Sigmoid colon (tissue), 7 donors: ENCODE measurements at regions of chr12 and their contacts with region 1.

Region 1: GRCh38 chr12:48716493-48717251 is at the start of gene CCNT1:
- DNase-seq: peak; percentile 100
- H3K4me3 ChIP-seq: peak within 1 kb of the TSS; percentile 60 to 74 (median 68)
- H3K27ac ChIP-seq: peak within 1 kb of the TSS; percentile 86 to 91 (median 90)
- H3K4me1 ChIP-seq: peaks cover 0 to 36% (median 34%) of the 10 kb centered on the region in 4 donors
- H3K27me3 ChIP-seq: no peaks in the 10 kb centered on the region
- CTCF ChIP-seq: peak; percentile 37 to 59 (median 54)
- EP300 ChIP-seq: peak in 2 of 4 donors; percentile 57 to 87
- POLR2A ChIP-seq: peak; percentile 72 to 81
- total RNA-seq, gene CCNT1: 20.7 to 29.2 (median 23.9) TPM

Region 2: GRCh38 chr12:48681738-48682532 is 34.7 kb before region 1 on chr12 and contains the start of gene KANSL2:
- intact Hi-C with region 1: loop called (anchors 1 kb)
- DNase-seq: peak; percentile 100
- H3K4me3 ChIP-seq: peak within 1 kb of the TSS; percentile 64 to 89 (median 79)
- H3K27ac ChIP-seq: peak within 1 kb of the TSS; percentile 85 to 96 (median 92)
- H3K4me1 ChIP-seq: peaks cover 0 to 53% (median 44%) of the 10 kb centered on the region in 4 donors
- H3K27me3 ChIP-seq: no peaks in the 10 kb centered on the region
- CTCF ChIP-seq: no peak
- EP300 ChIP-seq: no peak
- POLR2A ChIP-seq: peak; percentile 99
- total RNA-seq, gene KANSL2: 28.2 to 63.0 (median 37.0) TPM

Region 3: GRCh38 chr12:49018261-49019119 is 301.8 kb after region 1 on chr12 and contains the start of gene PRKAG1:
- intact Hi-C with region 1: loop called (anchors 10 kb)
- DNase-seq: peak; percentile 98
- H3K4me3 ChIP-seq: peak within 1 kb of the TSS; percentile 65 to 95 (median 82)
- H3K27ac ChIP-seq: peak within 1 kb of the TSS; percentile 89 to 95 (median 92)
- H3K4me1 ChIP-seq: peaks cover 0 to 29% (median 18%) of the 10 kb centered on the region in 4 donors
- H3K27me3 ChIP-seq: no peaks in the 10 kb centered on the region
- CTCF ChIP-seq: peak in 2 of 4 experiments; percentile 25 to 36
- EP300 ChIP-seq: peak in 2 of 4 donors; percentile 24 to 40
- POLR2A ChIP-seq: peak; percentile 81 to 89
- total RNA-seq, gene PRKAG1: 49.6 to 71.3 (median 60.0) TPM